ENCODE measurements at regions of chr22 and their contacts with region 1.

Region 1: DNA sequence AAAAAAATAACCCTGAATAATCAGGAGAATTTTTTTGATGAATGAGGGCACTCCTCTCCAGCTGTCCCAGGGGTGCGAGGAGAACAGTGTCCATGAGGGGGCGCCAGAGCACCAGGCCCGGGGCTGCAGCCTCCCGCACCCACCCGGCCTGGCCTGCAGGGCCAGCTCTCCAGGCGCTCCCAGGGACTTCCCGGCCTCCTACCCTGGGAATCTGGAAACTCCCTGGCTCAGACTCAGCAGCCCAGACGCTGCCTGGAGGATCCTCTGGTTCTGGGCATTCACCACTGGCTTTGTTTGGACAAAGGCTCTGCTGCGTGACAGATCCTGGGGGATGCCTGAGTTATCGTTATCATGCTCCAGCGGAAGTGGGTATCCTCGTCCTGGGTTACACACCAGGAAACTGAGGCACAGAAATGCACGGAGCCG is 31.0 kb downstream of the MCM5 start:
- DNase-seq: peak; percentile 90 to 91
- ATAC-seq: peak; percentile 94 to 99 (median 98)
- H3K4me3 ChIP-seq: no peak overlapping the region
- H3K27ac ChIP-seq: peak overlapping the region in 5 of 10 donors; percentile 14 to 69 (median 48)
- H3K4me1 ChIP-seq: peaks cover 0 to 14% (median 8%) of the 10 kb centered on the region in 9 donors
- H3K27me3 ChIP-seq: no peaks in the 10 kb centered on the region
- CTCF ChIP-seq: peak; percentile 94 to 99 (median 97)

Region 2: GRCh38 chr22:33588860-33589259 is 1842.0 kb before region 1 on chr22:
- intact Hi-C with region 1: no loop called
- DNase-seq: no peak
- ATAC-seq: no peak
- H3K4me3 ChIP-seq: no peak overlapping the region
- H3K27ac ChIP-seq: no peak overlapping the region
- H3K4me1 ChIP-seq: no peaks in the 10 kb centered on the region
- H3K27me3 ChIP-seq: no peaks in the 10 kb centered on the region
- CTCF ChIP-seq: no peak

Region 3: DNA sequence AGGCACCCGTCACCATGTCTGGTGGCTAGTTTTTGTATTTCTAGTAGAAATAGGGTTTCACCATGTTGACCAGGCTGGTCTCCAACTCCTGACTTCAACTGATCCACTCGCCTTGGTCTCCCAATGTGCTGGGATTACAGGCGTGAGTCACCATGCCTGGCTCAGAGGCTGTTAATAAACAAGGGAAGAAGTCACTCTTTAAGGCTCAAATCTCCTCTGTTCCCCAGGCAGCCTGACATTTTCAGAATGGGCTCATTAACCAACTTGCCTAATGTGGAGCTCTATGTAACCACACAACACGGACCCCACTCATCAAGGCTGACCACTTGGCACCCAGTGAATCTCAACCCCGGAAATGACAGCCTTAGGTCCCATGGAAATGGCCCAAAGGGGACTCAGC is 705.6 kb after region 1 on chr22:
- intact Hi-C with region 1: loop called in 1 of 10 experiments (anchors 10 kb)
- DNase-seq: no peak
- ATAC-seq: peak in 4 of 8 donors; percentile 20 to 68 (median 44)
- H3K4me3 ChIP-seq: no peak overlapping the region
- H3K27ac ChIP-seq: peak overlapping the region in 2 of 10 donors; percentile 34 to 56
- H3K4me1 ChIP-seq: peaks cover 0 to 28% (median 0%) of the 10 kb centered on the region in 9 donors
- H3K27me3 ChIP-seq: no peaks in the 10 kb centered on the region
- CTCF ChIP-seq: no peak

Measured in heart right ventricle (tissue), 16 donors.